Kidney (tissue), 22 donors: ENCODE measurements at regions of chr6 and their contacts with region 1.

Region 1: DNA sequence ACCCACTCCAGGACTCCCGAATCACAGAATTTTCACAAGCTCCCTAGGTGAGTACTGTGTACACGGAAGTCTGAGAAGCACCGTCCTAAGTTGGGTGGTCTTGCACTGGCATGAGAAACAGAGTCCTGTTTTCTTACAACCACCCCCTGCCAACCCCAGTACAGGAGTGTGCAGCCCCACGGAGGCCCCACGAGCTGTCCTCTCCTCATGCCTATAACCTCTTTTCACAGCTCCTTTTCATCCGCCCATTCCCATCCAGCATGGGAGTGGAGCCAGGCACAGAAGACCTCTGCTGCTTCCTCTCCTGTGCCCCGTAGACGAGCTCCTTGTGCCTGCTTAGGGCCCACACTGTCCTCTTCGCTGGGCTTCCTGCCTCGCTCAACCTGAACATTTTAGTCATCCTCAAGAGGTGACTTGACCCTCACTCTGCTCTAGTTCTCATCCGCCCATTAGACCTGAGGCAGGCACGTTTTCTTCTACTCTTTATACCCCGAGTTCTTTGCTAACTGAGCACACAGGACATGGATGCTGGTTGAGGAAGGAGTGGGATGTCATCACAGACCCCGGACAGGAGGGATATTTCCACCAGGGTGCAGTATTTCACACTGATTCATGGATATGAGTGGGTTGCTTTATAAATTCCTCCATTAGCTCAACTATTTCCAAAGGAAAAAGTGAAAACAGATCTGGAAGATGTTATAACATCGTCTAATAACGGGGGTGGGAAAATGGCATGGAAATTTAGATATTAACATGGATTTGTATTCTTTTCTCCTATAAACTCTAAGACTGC is 160.5 kb downstream of the TTLL2 start:
- DNase-seq: peak in 3 of 5 donors; percentile 42 to 79 (median 60)
- H3K4me3 ChIP-seq: no peak overlapping the region
- H3K27ac ChIP-seq: no peak overlapping the region
- H3K4me1 ChIP-seq: no peaks in the 10 kb centered on the region
- H3K27me3 ChIP-seq: no peaks in the 10 kb centered on the region
- CTCF ChIP-seq: peak; percentile 44

Region 2: GRCh38 chr6:167898673-167899311 is 413.4 kb after region 1 on chr6:
- intact Hi-C with region 1: loop called (anchors 10 kb)
- DNase-seq: peak in 2 of 5 donors; percentile 34 to 53
- H3K4me3 ChIP-seq: no peak overlapping the region
- H3K27ac ChIP-seq: no peak overlapping the region
- H3K4me1 ChIP-seq: peaks cover 0 to 7% (median 2%) of the 10 kb centered on the region in 3 donors
- H3K27me3 ChIP-seq: no peaks in the 10 kb centered on the region
- CTCF ChIP-seq: peak; percentile 57

Region 3: GRCh38 chr6:167920165-167920564 is 434.8 kb after region 1 on chr6:
- intact Hi-C with region 1: no loop called
- DNase-seq: no peak
- H3K4me3 ChIP-seq: no peak overlapping the region
- H3K27ac ChIP-seq: no peak overlapping the region
- H3K4me1 ChIP-seq: no peaks in the 10 kb centered on the region
- H3K27me3 ChIP-seq: no peaks in the 10 kb centered on the region
- CTCF ChIP-seq: no peak